CD4-positive, alpha-beta memory T cell (primary cell): ENCODE measurements at regions of chr16 and their contacts with region 1.

Region 1: DNA sequence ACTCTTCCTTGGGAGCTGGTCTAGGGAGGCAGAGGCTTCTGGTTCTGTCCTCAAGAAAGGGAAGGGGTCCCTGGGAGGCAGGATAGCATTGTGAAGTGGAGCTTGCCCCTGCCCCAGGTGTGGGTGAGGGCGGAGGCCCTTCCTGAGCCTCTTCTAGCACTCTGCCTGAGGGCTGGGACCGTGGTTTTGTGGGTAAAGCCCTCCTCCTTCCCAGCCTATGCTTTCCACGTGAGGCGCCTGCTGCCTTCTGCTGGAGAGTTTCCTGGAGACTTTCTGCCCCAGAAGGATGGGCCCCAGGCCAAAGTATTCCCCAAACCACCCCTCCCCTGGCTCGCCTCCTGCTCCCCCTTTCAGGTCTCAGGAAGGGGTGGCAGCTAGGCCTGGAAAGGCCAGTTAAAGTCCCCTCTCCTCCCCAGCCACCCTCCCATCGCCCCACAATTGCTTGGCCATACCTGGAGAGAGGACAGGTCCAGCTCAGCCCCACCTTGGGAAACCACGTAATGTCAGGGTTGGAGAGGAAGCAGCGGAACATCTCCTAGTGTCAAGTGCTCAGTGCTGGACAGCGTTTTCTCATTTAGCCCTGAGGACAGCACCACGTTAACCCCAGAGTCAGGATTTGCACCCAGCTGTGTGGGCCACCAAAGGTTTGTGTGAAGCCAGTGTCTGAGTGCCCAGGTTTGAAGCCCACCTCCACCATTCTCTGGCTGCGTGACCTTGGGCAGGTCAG is 5.6 kb downstream of the SBK1 start:
- DNase-seq: peak in 1 of 5 donors; percentile 26
- H3K4me3 ChIP-seq: no peak overlapping the region
- H3K4me3 Mint-ChIP-seq: peak overlapping the region; percentile 52 to 86 (median 75)
- H3K27ac ChIP-seq: peak overlapping the region; percentile 5
- H3K27ac Mint-ChIP-seq: peak overlapping the region; percentile 50 to 95 (median 87)
- H3K4me1 ChIP-seq: peaks cover 92% of the 10 kb centered on the region
- H3K4me1 Mint-ChIP-seq: peaks cover 48 to 81% (median 62%) of the 10 kb centered on the region in 4 donors
- H3K27me3 ChIP-seq: no peaks in the 10 kb centered on the region
- H3K27me3 Mint-ChIP-seq: no peaks in the 10 kb centered on the region

Region 2: DNA sequence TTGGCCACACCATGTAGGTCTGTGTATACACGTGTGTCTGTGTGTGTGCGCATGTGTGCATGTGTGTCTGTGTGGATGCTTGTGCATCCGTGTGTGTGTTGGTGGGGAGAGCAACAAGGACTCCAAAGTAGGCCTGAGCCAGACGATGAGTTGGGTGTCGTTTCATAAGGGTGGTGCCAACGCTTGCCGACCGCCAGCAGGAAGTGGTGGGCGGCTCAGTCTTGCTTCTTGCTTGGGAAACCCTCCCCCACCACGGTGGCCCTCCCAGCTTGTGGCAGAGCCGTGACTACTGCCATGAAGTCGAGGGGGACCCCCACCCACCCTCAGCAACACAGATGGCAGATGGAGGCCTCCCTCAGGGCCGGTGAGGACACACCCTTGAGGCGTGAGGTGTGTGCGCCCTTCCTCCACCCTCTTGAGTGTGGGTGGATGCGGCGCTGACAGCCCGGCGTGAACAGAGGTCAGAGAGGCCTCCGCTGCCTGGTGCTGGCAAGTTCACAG is 11.9 kb after region 1 on chr16:
- CTCF ChIA-PET with region 1: interaction called, 28 read pairs
- POLR2A ChIA-PET with region 1: interaction called, 114 read pairs
- intact Hi-C with region 1: loop called (anchors 1 kb)
- DNase-seq: peak; percentile 85 to 95 (median 88)
- H3K4me3 ChIP-seq: peak overlapping the region in 1 of 2 donors; percentile 16
- H3K4me3 Mint-ChIP-seq: peak overlapping the region; percentile 8 to 83 (median 75)
- H3K27ac ChIP-seq: peak overlapping the region; percentile 72
- H3K27ac Mint-ChIP-seq: peak overlapping the region; percentile 91 to 99 (median 96)
- H3K4me1 ChIP-seq: peaks cover 53% of the 10 kb centered on the region
- H3K4me1 Mint-ChIP-seq: peaks cover 47 to 70% (median 55%) of the 10 kb centered on the region in 4 donors
- H3K27me3 ChIP-seq: no peaks in the 10 kb centered on the region
- H3K27me3 Mint-ChIP-seq: no peaks in the 10 kb centered on the region

Region 3: DNA sequence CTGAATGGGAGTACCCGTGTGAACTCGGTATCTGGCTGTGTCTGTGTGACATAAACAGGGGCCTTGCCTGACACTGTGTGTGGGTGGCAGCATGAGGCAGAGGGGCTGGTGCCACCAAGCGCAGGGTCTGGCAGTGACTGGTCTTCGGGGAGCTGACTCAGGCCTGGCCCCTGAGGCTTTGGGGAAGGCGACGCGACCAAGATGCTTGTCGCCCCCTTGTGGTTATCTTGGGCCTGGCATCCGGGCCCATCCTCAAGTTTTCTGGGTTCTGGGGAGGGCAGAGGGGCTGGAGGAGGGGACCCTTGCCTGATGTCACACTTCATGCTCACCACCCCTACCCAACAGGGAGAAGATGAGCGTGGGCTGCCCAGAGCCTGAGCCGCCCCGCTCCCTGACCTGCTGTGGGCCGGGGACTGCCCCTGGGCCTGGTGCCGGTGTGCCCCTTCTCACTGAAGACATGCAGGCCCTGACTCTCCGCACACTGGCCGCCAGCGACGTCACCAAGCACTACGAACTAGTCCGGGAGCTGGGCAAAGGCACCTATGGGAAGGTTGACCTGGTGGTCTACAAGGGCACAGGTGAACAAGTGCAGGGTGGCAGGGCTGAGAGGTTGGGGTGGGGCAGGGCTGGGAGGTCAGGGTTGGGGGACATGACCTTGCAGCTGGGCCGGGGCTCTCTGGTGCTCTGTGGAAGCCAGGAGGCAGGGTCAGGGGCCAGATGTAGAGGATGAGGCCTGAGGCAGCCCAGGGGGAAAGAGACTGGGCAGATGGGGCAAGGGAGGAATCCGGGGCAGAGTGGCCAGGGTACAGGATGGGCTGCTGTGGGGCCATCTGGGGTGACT is 19.3 kb after region 1 on chr16:
- CTCF ChIA-PET with region 1: interaction called, 48 read pairs
- POLR2A ChIA-PET with region 1: interaction called, 114 read pairs
- intact Hi-C with region 1: no loop called
- DNase-seq: peak; percentile 58 to 72 (median 64)
- H3K4me3 ChIP-seq: no peak overlapping the region
- H3K4me3 Mint-ChIP-seq: peak overlapping the region in 5 of 8 donors; percentile 4 to 54 (median 48)
- H3K27ac ChIP-seq: no peak overlapping the region
- H3K27ac Mint-ChIP-seq: peak overlapping the region in 6 of 7 donors; percentile 41 to 88 (median 68)
- H3K4me1 ChIP-seq: peaks cover 30% of the 10 kb centered on the region
- H3K4me1 Mint-ChIP-seq: peaks cover 15 to 39% (median 18%) of the 10 kb centered on the region in 4 donors
- H3K27me3 ChIP-seq: no peaks in the 10 kb centered on the region
- H3K27me3 Mint-ChIP-seq: no peaks in the 10 kb centered on the region